Pancreas (tissue), 10 donors: ENCODE measurements at regions of chr19 and their contacts with region 1.

Region 1: DNA sequence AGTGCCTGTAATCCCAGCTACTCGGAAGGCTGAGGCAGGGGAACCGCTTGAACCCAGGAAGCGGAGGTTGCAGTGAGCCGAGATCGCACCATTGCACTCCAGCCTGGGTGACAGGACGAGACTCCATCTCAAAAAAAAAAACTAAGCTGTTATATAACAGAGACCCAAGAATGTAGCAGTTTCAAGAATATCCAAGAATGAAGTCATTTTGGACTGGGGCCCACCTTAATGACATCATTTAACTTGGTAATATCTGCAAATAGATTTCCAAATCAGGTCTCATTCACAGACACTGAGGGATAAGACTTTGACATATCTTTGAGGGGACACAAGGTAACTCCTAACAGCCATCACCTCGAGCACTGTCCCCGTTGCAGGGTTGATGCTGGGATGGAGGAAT is 36.5 kb upstream of the MRI1 start:
- DNase-seq: no peak
- ATAC-seq: no peak
- H3K4me3 ChIP-seq: no peak overlapping the region
- H3K27ac ChIP-seq: no peak overlapping the region
- H3K4me1 ChIP-seq: peaks cover 0 to 9% (median 7%) of the 10 kb centered on the region in 3 donors
- H3K27me3 ChIP-seq: no peaks in the 10 kb centered on the region
- CTCF ChIP-seq: no peak

Region 2: DNA sequence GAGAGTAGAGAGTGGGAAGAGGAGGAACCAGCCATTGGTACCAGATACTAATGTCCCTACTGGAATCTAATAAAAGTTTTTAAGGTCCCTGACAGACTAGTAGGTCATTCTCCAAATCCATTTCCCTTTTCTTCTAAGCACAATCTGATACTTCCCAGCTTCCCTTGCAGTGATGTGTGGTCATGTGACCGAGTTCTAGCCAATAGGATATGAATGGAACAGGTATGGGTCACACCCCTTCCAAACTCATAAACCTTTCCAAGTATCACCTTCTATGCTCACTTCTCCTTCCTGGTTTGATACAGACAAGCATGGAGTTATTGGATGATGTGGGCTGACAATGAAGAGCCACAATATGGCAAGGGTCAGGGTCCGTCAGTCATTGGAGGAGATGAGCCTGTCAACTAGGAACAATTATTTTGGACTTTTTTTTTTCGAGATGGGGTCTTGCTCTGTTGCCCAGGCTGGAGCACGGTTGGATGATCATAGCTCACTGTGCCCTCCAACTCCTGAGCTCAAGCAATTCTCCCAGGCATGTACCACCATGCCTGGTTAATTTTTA is 276.3 kb before region 1 on chr19:
- intact Hi-C with region 1: no loop called
- DNase-seq: no peak
- ATAC-seq: no peak
- H3K4me3 ChIP-seq: no peak overlapping the region
- H3K27ac ChIP-seq: no peak overlapping the region
- H3K4me1 ChIP-seq: no peaks in the 10 kb centered on the region
- H3K27me3 ChIP-seq: no peaks in the 10 kb centered on the region
- CTCF ChIP-seq: no peak

Region 3: GRCh38 chr19:13610039-13610691 is 117.6 kb before region 1 on chr19:
- intact Hi-C with region 1: loop called in 1 of 3 experiments (anchors 10 kb)
- DNase-seq: peak in 2 of 6 donors; percentile 16 to 29
- ATAC-seq: peak in 3 of 4 donors; percentile 61 to 85 (median 81)
- H3K4me3 ChIP-seq: no peak overlapping the region
- H3K27ac ChIP-seq: no peak overlapping the region
- H3K4me1 ChIP-seq: no peaks in the 10 kb centered on the region
- H3K27me3 ChIP-seq: no peaks in the 10 kb centered on the region
- CTCF ChIP-seq: no peak